ENCODE measurements at regions of chr7 and their contacts with region 1.

Region 1: DNA sequence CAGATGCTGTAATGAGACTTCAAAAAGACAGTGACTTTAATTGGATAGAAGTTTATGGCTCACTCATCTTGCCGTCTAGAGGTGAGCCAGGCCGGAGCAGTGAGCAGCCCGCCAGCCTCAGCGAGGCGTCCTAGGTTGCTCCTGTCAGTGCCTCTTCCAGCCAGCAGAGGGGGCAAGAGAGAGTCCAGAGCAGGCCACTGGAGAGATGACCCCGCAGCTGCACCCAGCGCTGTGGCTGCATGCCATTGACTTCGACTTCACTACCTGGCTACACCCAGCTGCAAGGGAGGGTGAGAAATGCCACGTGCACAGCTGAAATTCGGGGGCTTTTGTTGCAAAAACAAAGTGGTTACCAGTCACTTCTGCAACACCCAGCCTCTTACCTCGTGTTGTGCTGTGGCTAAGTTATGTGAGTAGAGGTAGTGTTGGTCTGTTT is 26.5 kb downstream of the NUB1 start:
- DNase-seq: peak; percentile 93
- H3K4me3 ChIP-seq: no peak overlapping the region
- H3K27ac ChIP-seq: peak overlapping the region in 3 of 8 donors; percentile 61 to 65 (median 63)
- H3K4me1 ChIP-seq: peaks cover 3 to 46% (median 15%) of the 10 kb centered on the region in 6 donors
- H3K27me3 ChIP-seq: no peaks in the 10 kb centered on the region
- CTCF ChIP-seq: peak; percentile 86 to 98 (median 96)
- POLR2A ChIP-seq: no peak

Region 2: DNA sequence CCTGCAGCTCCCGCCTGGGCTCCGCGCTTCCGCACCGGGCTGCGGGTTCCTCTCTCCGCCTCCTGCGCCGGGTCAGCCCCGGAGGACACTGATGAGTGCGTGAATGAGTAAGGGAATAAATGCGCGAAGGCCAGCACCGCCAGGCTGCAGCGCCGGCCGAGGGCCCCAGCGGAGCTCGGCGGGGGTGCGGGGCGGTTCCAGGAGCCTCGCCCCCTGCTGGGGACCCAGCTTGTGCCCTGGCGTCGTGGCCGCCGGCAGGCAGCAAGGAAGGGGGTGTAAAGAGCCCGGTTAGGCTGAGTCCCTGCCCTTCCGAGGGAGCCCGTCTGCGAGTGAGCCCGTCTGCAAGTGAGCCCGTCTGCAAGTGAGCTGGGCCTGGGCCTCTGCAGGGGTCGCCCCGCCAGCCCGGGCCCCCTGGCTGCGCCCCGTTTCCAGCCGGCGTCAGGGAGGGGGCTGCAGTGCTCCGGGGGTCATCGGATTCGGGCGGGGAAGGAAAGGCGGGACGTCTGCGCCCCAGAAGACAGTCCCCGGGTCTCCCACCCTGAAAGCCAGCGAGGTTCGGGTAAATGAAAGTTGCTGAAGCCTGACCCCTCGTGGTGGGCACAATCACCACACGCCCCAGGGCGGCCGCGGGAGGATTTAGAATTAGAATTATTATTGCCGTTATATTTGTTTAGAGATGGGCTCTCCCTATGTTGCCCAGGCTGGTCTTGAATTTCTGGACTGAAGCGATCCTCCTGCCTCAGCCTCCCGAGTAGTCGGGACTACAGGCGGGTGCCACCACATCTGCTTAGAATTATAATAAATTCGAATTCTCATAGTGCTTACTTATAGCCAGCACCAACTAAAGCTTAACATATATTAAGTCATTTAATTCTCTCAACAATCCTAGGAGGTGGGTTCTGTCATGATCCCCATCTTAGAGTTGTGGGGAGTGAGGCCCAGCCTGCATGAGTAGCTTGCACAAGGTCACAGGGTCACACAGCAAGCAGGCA is 80.4 kb after region 1 on chr7:
- intact Hi-C with region 1: loop called (anchors 5 kb)
- DNase-seq: peak; percentile 90
- H3K4me3 ChIP-seq: peak overlapping the region; percentile 30 to 70 (median 50)
- H3K27ac ChIP-seq: peak overlapping the region; percentile 35 to 83 (median 72)
- H3K4me1 ChIP-seq: peaks cover 0 to 21% (median 8%) of the 10 kb centered on the region in 6 donors
- H3K27me3 ChIP-seq: peaks cover 0 to 9% (median 0%) of the 10 kb centered on the region in 7 donors
- CTCF ChIP-seq: peak; percentile 67 to 93 (median 87)
- POLR2A ChIP-seq: no peak

Region 3: GRCh38 chr7:151759591-151760042 is 391.5 kb after region 1 on chr7:
- intact Hi-C with region 1: loop called (anchors 10 kb)
- DNase-seq: no peak
- H3K4me3 ChIP-seq: no peak overlapping the region
- H3K27ac ChIP-seq: no peak overlapping the region
- H3K4me1 ChIP-seq: peaks cover 11 to 29% (median 19%) of the 10 kb centered on the region in 6 donors
- H3K27me3 ChIP-seq: no peaks in the 10 kb centered on the region
- CTCF ChIP-seq: peak; percentile 46 to 88 (median 80)
- POLR2A ChIP-seq: no peak

Region 4: GRCh38 chr7:151806204-151806603 is 438.1 kb after region 1 on chr7:
- intact Hi-C with region 1: no loop called
- DNase-seq: no peak
- H3K4me3 ChIP-seq: no peak overlapping the region
- H3K27ac ChIP-seq: peak overlapping the region in 3 of 8 donors; percentile 3 to 66 (median 50)
- H3K4me1 ChIP-seq: peaks cover 0 to 30% (median 3%) of the 10 kb centered on the region in 6 donors
- H3K27me3 ChIP-seq: no peaks in the 10 kb centered on the region
- CTCF ChIP-seq: no peak
- POLR2A ChIP-seq: no peak

Measured in spleen (tissue), 13 donors.